PC-9 (cell line): ENCODE measurements at regions of chr1 and their contacts with region 1.

Region 1: GRCh38 chr1:48677306-48678287 is 99.1 kb downstream of the BEND5 start:
- DNase-seq: peak; percentile 23 to 46
- H3K4me3 ChIP-seq: no peak overlapping the region
- H3K27ac ChIP-seq: no peak overlapping the region
- H3K4me1 ChIP-seq: no peaks in the 10 kb centered on the region
- H3K27me3 ChIP-seq: peaks cover 14% of the 10 kb centered on the region
- CTCF ChIP-seq: peak; percentile 71

Region 2: DNA sequence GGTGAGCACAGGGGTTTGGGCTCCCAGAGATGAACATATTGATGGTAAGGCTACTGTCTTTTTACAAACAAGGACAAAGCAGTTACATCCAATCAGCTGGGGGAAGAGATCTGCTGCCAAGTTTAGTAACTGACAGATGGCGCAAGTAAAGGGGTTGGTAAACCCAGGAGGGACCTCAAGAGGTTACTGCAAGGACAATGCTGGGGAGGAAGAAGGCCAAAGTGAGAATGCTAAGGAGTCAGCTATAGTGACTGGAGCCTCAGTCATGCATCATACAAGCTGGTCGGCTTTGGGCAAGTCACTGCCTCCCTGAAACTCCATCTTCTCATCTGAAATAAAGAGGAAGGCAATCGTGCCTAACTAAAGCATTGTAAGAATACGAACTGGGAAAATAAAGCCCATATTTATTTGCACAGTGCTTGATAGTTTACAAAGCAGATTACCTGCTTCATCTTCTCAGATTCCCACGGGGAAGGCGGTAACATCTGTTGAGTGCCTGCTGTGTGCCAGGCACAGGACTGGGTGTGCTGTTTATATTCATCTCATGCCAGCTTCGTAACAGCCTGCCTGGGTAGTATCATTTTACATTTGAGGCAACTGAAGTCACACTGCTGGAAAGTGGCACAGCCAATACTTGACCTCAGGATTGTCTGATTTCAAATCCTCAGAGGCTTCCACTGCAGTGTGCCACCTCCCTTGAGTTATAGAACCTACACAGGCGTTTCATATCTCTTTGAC is 15.7 kb before region 1 on chr1:
- CTCF ChIA-PET with region 1: no interaction called
- POLR2A ChIA-PET with region 1: no interaction called
- intact Hi-C with region 1: no loop called
- DNase-seq: no peak
- H3K4me3 ChIP-seq: no peak overlapping the region
- H3K27ac ChIP-seq: no peak overlapping the region
- H3K4me1 ChIP-seq: no peaks in the 10 kb centered on the region
- H3K27me3 ChIP-seq: peaks cover 17% of the 10 kb centered on the region; the same call in 1 of the 2 replicates
- CTCF ChIP-seq: no peak

Region 3: GRCh38 chr1:48916130-48917069 is 238.8 kb after region 1 on chr1:
- CTCF ChIA-PET with region 1: no interaction called
- POLR2A ChIA-PET with region 1: no interaction called
- intact Hi-C with region 1: loop called (anchors 2 kb)
- DNase-seq: peak in 1 of 2 experiments; percentile 42
- H3K4me3 ChIP-seq: no peak overlapping the region
- H3K27ac ChIP-seq: no peak overlapping the region
- H3K4me1 ChIP-seq: no peaks in the 10 kb centered on the region
- H3K27me3 ChIP-seq: peaks cover 4% of the 10 kb centered on the region; the same call in 1 of the 2 replicates
- CTCF ChIP-seq: peak; percentile 72

Region 4: DNA sequence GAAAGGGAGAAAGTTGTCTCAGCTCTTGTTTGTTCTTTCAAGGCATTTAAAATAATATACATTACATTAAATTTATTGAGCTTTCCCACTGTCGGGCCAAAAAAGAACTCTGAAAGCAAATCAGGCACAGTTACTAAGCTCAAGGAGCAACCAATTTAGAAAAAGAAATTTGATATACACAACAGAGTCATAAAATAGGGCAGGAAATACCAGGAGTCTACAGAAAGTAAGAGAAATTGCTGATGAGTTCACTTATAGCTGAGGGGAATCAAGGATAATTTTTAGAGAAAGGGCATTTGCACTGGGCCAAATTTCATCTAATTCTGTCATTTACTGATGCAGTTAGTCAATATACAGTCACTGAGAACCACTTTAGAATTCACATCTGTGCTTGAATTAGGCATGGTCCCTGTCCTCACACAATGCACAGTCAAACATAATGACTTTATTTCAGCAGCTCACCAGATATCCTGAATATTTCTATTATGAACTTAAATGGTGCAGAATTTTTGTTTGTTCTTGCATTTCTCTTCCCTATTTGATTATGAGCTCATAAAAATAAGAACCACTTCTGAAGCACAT is 348.7 kb after region 1 on chr1:
- CTCF ChIA-PET with region 1: no interaction called
- POLR2A ChIA-PET with region 1: no interaction called
- intact Hi-C with region 1: no loop called
- DNase-seq: no peak
- H3K4me3 ChIP-seq: no peak overlapping the region
- H3K27ac ChIP-seq: no peak overlapping the region
- H3K4me1 ChIP-seq: no peaks in the 10 kb centered on the region
- H3K27me3 ChIP-seq: no peaks in the 10 kb centered on the region
- CTCF ChIP-seq: no peak

Region 5: GRCh38 chr1:50348449-50349241 is 1671.0 kb after region 1 on chr1:
- CTCF ChIA-PET with region 1: no interaction called
- POLR2A ChIA-PET with region 1: no interaction called
- intact Hi-C with region 1: loop called (anchors 5 kb)
- DNase-seq: peak; percentile 35 to 61
- H3K4me3 ChIP-seq: no peak overlapping the region
- H3K27ac ChIP-seq: no peak overlapping the region
- H3K4me1 ChIP-seq: no peaks in the 10 kb centered on the region
- H3K27me3 ChIP-seq: peaks cover 37% of the 10 kb centered on the region
- CTCF ChIP-seq: peak; percentile 93